ENCODE measurements at regions of chr1 and their contacts with region 1.

Region 1: DNA sequence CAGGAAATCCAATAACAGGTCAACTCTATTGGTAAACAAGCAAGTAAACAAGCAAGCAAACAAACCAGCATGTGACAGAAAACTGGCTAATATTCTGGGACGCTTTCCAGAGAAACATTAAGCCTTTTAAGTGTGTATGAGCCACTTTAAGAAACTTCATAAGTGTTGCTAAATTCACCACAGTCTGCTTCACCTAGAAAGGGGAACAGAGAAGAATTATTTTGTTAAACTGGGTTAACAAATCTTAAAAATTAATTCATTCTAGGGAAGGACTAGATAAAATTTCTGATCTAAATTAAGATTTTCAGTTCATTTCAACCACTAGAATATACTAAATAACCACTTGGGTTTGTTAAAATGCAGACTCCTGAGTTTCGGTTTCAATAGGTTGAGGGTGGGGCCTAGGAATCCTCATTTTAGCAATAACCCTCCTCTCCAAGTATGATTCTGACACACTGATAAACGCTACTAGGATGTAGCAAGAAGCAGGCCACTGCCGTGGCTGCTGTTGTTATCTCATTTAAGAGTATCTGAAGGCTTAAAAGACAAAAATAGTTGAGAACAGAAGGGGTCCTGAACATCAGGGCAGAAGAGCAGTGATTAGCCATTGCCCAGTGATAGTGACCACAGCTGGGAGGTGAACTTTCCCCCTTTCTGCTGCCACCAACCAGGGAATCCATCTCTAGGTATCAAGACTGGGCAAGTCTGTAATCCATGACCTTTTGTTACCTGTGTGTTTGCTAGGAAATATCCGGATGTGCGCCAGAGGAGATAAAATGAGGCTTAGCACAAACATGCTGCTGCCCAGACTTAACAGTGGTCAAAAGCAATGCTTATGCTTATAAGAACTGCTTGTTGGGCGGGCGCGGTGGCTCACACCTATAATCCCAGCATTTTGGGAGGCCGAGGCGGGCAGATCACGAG is 11.2 kb downstream of the CREG1 start:
- DNase-seq: no peak
- H3K4me3 ChIP-seq: no peak overlapping the region
- H3K27ac ChIP-seq: no peak overlapping the region
- H3K27me3 ChIP-seq: no peaks in the 10 kb centered on the region
- CTCF ChIP-seq: no peak

Region 2: DNA sequence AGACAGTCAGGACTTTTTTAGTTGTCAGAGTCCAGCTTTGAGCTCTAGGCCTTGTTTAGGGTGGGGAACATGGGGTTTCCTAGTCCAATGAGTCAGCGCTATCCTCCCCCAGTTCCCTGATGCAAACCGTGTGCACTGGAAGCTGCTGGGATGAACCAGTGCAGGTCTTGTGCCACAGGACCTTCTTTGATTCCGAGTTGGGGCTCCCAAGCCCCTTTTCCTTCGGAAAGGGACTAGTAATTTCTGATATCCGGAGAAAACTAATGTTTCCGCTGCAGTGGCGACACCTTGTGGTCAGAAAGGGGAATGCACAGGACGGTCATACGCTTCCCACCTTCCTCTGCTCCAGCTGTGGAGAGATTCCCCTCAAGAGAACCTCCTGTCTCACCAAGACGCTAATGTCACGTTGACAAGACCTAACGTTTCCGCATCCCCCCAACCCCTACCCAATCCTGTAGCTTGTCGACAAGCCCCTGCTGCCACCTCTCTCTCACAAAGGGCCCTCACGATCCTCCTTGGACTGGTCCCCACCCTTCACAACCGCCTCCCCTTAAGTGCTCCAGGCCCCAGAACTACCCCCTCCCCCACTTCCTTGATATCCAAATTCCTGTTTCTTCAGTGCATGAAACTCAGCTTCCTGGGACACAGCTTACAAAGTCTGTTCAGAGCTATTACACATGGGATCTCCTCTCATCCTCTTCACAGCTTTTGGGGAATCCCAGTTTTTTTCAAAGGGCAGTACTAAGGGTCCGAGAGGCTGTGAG is 483.1 kb before region 1 on chr1:
- CTCF ChIA-PET with region 1: interaction called, 24 read pairs
- POLR2A ChIA-PET with region 1: no interaction called
- DNase-seq: peak; percentile 27
- H3K4me3 ChIP-seq: no peak overlapping the region
- H3K27ac ChIP-seq: no peak overlapping the region
- H3K27me3 ChIP-seq: no peaks in the 10 kb centered on the region
- CTCF ChIP-seq: peak; percentile 97

Region 3: GRCh38 chr1:167227934-167228378 is 314.4 kb before region 1 on chr1:
- CTCF ChIA-PET with region 1: interaction called, 15 read pairs
- POLR2A ChIA-PET with region 1: no interaction called
- DNase-seq: no peak
- H3K4me3 ChIP-seq: no peak overlapping the region
- H3K27ac ChIP-seq: no peak overlapping the region
- H3K27me3 ChIP-seq: no peaks in the 10 kb centered on the region
- CTCF ChIP-seq: no peak

Region 4: DNA sequence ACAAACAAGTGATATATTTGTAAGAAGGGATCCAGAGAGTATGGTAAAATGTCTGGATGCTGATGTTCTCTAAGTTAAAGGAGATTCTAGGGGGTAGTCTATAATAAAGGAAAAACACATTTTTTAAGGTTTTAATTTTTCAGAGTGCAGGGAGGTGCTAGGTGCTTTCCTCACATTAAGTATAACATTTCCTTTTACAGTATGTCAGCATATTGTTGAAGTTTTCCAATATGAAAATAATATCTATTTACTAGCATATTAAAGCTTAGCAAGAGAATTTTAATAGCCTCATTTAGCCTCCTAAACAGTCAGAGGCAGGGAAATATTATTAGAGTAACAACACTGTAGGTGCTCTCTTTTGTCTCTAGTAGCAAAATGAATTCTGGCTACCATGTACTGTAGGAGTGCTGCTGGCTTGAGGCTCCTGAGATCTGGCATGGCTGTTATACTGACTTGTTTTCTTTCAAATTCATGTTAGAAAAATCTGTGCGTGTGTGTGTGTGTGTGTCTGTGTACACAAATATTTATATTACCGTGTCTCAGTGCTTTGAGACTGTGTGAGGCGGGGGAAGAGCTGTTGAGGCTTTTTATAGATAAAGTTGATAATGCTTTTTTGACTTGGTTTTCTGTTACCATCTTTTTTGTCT is 250.7 kb before region 1 on chr1:
- CTCF ChIA-PET with region 1: no interaction called
- POLR2A ChIA-PET with region 1: no interaction called
- DNase-seq: no peak
- H3K4me3 ChIP-seq: no peak overlapping the region
- H3K27ac ChIP-seq: no peak overlapping the region
- H3K27me3 ChIP-seq: no peaks in the 10 kb centered on the region
- CTCF ChIP-seq: no peak

Region 5: GRCh38 chr1:167509587-167509986 is 32.8 kb before region 1 on chr1:
- CTCF ChIA-PET with region 1: interaction called, 10 read pairs
- POLR2A ChIA-PET with region 1: no interaction called
- DNase-seq: no peak
- H3K4me3 ChIP-seq: no peak overlapping the region
- H3K27ac ChIP-seq: no peak overlapping the region
- H3K27me3 ChIP-seq: peaks cover 9% of the 10 kb centered on the region
- CTCF ChIP-seq: no peak

Region 6: DNA sequence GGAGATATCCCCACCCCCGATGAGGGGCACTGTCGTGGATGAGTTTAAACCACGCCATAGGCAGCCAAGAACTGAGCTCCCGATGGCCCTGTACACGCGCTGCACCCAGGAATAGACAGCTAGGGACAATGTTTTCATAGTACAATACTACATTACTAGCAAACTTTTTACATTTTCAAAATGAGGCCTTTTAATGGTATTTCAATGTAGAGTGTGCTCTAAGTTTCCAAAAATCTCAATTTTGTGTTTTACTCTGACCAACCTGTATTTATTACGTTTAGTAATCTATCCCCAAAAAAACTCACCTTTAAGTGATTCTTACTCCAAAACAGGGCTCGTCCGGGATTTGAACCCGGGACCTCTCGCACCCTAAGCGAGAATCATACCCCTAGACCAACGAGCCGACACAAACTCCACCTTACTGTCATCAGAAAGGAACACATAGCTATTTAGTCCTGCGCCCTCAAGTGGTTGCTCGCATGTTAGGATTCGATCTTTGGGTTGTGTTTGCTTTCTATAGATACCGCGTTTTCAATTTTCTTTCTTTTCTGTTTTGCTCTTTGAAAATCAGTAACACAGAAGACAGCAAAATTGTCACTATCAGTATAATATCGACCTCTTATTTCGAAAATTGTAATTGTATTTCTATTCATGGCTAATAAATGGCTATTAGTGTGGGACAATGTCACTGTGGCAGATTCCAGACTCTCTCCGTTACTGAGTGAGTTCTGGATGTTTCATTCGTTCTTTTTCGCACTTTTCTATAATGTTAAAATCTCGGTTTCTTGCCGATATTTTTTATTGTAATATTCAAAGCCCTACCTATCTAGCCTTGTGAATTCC is 173.0 kb after region 1 on chr1:
- CTCF ChIA-PET with region 1: interaction called, 11 read pairs
- POLR2A ChIA-PET with region 1: no interaction called
- DNase-seq: peak; percentile 77
- H3K4me3 ChIP-seq: peak overlapping the region; percentile 95
- H3K27ac ChIP-seq: peak overlapping the region; percentile 90
- H3K27me3 ChIP-seq: no peaks in the 10 kb centered on the region
- CTCF ChIP-seq: peak; percentile 96

Measured in AG04450 (cell line).